OCI-LY7 (cell line): ENCODE measurements at regions of chrX and their contacts with region 1.

Region 1: DNA sequence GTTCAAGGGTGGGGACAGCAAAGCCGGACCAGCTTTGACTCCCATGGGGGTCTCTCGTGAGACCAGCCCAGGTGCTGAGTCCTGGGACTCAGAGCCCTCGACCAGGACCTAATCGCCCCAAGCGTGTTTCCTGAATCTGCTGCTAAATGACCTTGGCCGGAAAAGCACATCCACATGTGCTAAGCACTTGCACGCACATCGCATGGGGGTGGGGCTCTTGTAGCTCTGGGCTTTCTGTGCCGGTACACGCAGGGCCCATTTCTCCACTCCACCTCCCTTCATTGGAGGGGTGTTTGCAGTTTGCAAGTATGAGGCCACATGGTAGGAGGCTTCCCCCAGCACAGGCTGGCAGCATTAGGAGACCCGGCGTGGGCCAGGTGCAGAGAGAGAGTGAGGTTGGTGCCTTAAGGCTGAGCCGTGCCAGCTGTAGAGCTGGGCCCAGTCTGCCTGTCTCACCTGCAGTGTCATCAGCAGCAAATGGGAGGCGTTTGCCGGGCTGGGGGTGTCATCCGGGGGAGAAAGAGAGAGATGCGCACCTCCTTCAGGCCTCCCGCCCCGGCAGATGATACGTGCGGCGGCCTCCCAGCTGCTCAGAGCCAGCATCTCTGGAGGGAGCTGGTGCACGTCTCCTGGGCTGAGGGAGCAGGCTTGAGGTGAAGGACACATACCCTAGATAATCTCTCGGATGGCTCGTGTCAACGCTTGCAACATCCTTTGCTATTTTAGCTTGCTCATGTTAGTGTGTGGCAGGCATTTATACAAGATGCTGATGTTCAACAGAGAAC is 45.2 kb upstream of the CLCN4 start:
- DNase-seq: peak; percentile 89
- H3K4me3 ChIP-seq: peak overlapping the region; percentile 60
- H3K27ac ChIP-seq: peak overlapping the region; percentile 100
- H3K4me1 ChIP-seq: peaks cover 95% of the 10 kb centered on the region
- CTCF ChIP-seq: no peak

Region 2: DNA sequence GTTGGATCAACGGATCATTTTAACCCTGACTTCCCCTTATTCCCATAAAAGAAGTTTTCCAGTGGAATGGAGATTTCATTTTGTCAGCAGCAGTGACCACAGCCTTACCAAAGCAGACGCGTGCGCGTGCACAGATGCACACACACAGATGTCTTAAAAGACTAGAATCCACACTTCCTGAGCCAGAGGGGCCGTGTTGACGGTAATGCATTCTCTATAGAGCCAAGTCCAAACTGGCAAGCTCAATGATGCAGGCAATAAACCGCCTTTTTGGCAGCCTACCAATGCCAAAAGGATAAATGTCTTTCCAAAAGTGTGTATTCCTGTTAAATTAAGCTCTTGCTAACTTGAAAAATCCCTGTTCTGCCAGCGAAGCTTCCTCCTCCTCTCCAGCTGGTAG is 163.2 kb before region 1 on chrX:
- CTCF ChIA-PET with region 1: no interaction called
- POLR2A ChIA-PET with region 1: no interaction called
- intact Hi-C with region 1: no loop called
- DNase-seq: no peak
- H3K4me3 ChIP-seq: no peak overlapping the region
- H3K27ac ChIP-seq: no peak overlapping the region
- H3K4me1 ChIP-seq: peaks cover 5% of the 10 kb centered on the region
- CTCF ChIP-seq: no peak

Region 3: DNA sequence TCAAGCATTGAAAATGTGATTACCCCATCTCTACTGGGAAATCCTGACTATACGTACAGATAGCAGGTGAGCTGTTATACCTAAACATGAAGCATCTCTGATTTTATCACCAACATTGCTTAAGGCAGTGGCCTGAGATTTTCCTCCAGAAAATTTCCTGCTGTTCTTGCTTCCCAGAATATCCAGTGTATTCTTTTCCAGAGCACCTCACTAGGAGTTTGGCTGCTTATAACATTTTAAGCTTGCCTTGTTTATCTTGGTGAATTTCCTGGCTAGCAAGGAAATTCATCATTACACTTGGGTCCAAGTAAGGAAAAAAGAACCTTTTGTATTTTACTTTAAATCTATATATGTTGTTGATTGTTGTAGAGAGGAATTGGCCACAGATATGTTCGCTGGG is 27.7 kb before region 1 on chrX:
- CTCF ChIA-PET with region 1: interaction called, 3 read pairs
- POLR2A ChIA-PET with region 1: interaction called, 9 read pairs
- intact Hi-C with region 1: loop called (anchors 2 kb)
- DNase-seq: no peak
- H3K4me3 ChIP-seq: peak overlapping the region; percentile 44
- H3K27ac ChIP-seq: peak overlapping the region; percentile 82
- H3K4me1 ChIP-seq: peaks cover 81% of the 10 kb centered on the region
- CTCF ChIP-seq: no peak

Region 4: GRCh38 chrX:10098270-10098713 is 13.3 kb before region 1 on chrX:
- CTCF ChIA-PET with region 1: interaction called, 3 read pairs
- POLR2A ChIA-PET with region 1: interaction called, 77 read pairs
- intact Hi-C with region 1: loop called (anchors 2 kb)
- DNase-seq: peak; percentile 77
- H3K4me3 ChIP-seq: peak overlapping the region; percentile 70
- H3K27ac ChIP-seq: peak overlapping the region; percentile 99
- H3K4me1 ChIP-seq: peaks cover 71% of the 10 kb centered on the region
- CTCF ChIP-seq: no peak